Activated naive CD4-positive, alpha-beta T cell treated with anti-CD3 and anti-CD28 coated beads for 36 hours (primary cell): ENCODE measurements at regions of chr12 and their contacts with region 1.

Region 1: GRCh38 chr12:106223485-106224354 is 24.1 kb downstream of the CKAP4 start:
- DNase-seq: peak; percentile 86
- H3K4me3 Mint-ChIP-seq: no peak overlapping the region
- H3K27ac Mint-ChIP-seq: no peak overlapping the region
- H3K4me1 Mint-ChIP-seq: peaks cover 18% of the 10 kb centered on the region
- H3K27me3 Mint-ChIP-seq: peaks cover 3% of the 10 kb centered on the region

Region 2: GRCh38 chr12:106136263-106136662 is 87.5 kb before region 1 on chr12:
- CTCF ChIA-PET with region 1: interaction called, 9 read pairs
- intact Hi-C with region 1: loop called (anchors 1 kb)
- DNase-seq: peak; percentile 86
- H3K4me3 Mint-ChIP-seq: no peak overlapping the region
- H3K27ac Mint-ChIP-seq: no peak overlapping the region
- H3K4me1 Mint-ChIP-seq: peaks cover 3% of the 10 kb centered on the region
- H3K27me3 Mint-ChIP-seq: peaks cover 57% of the 10 kb centered on the region

Region 3: DNA sequence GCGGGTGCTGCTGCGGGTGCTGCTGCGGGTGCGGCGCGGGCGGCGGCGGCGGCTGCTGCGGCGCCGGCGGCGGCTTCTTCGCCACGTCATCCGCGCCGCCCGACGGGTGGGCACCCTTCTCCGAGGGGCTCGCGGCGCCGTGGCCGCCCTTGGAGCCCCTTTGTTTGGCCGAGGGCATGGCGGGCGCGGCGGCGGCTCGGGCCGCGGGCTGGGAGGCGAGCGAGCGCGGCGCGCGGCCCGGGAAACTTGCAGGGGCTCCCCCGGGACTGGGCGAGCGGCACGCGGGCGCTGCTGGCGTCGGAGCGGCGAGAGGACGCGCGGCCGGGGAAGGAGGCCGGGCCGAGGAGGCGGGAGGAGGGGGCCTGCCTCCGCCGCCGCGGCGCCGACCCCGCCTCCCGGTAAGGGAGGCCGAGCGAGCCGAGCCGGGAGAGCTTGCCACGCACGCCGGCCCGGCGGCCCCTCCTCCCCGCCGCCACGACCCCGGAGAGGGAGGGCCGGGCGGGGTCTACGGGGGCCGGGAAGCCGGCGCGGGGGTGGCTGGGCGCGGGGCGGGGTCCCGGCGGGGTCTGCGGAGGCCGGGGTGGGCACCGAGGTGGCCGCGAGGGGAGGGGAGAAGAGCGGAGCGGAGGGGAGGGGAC is 24.1 kb after region 1 on chr12 and contains the start of gene CKAP4:
- CTCF ChIA-PET with region 1: interaction called, 10 read pairs
- intact Hi-C with region 1: loop called (anchors 1 kb)
- DNase-seq: peak; percentile 60
- H3K4me3 Mint-ChIP-seq: peak within 1 kb of the TSS; percentile 75
- H3K27ac Mint-ChIP-seq: peak within 1 kb of the TSS; percentile 85
- H3K4me1 Mint-ChIP-seq: peaks cover 24% of the 10 kb centered on the region
- H3K27me3 Mint-ChIP-seq: no peaks in the 10 kb centered on the region
- total RNA-seq, gene CKAP4: 19.0 to 19.1 TPM

Region 4: GRCh38 chr12:106302401-106303201 is 78.9 kb after region 1 on chr12 and contains the start of gene TCP11L2:
- CTCF ChIA-PET with region 1: interaction called, 3 read pairs
- intact Hi-C with region 1: loop called (anchors 1 kb)
- DNase-seq: peak; percentile 88
- H3K4me3 Mint-ChIP-seq: peak within 1 kb of the TSS; percentile 93
- H3K27ac Mint-ChIP-seq: peak within 1 kb of the TSS; percentile 99
- H3K4me1 Mint-ChIP-seq: peaks cover 55% of the 10 kb centered on the region
- H3K27me3 Mint-ChIP-seq: no peaks in the 10 kb centered on the region
- total RNA-seq, gene TCP11L2: 9.2 to 10.3 TPM

Region 5: GRCh38 chr12:106841510-106842302 is 618.0 kb after region 1 on chr12:
- CTCF ChIA-PET with region 1: no interaction called
- intact Hi-C with region 1: loop called (anchors 2 kb)
- DNase-seq: peak; percentile 67
- H3K4me3 Mint-ChIP-seq: no peak overlapping the region
- H3K27ac Mint-ChIP-seq: no peak overlapping the region
- H3K4me1 Mint-ChIP-seq: peaks cover 7% of the 10 kb centered on the region
- H3K27me3 Mint-ChIP-seq: no peaks in the 10 kb centered on the region